PC-3 (cell line): ENCODE measurements at regions of chr11 and their contacts with region 1.

Region 1: GRCh38 chr11:7571640-7572000 is 57.8 kb downstream of the PPFIBP2 start:
- DNase-seq: peak; percentile 82
- ATAC-seq: peak; percentile 88
- H3K4me3 ChIP-seq: no peak overlapping the region
- H3K27ac ChIP-seq: no peak overlapping the region
- H3K4me1 ChIP-seq: peaks cover 25% of the 10 kb centered on the region
- H3K27me3 ChIP-seq: 0 out of 2 replicates have a peak, but pooled peaks cover 5% of the 10 kb centered on the region
- CTCF ChIP-seq: peak; percentile 93

Region 2: GRCh38 chr11:7143908-7144307 is 427.7 kb before region 1 on chr11:
- CTCF ChIA-PET with region 1: no interaction called
- POLR2A ChIA-PET with region 1: no interaction called
- intact Hi-C with region 1: loop called (anchors 10 kb)
- DNase-seq: peak; percentile 56
- ATAC-seq: peak; percentile 74
- H3K4me3 ChIP-seq: no peak overlapping the region
- H3K27ac ChIP-seq: no peak overlapping the region
- H3K4me1 ChIP-seq: no peaks in the 10 kb centered on the region
- H3K27me3 ChIP-seq: peaks cover 22% of the 10 kb centered on the region
- CTCF ChIP-seq: peak; percentile 72

Region 3: GRCh38 chr11:7612661-7613393 is 41.2 kb after region 1 on chr11:
- CTCF ChIA-PET with region 1: no interaction called
- POLR2A ChIA-PET with region 1: no interaction called
- intact Hi-C with region 1: no loop called
- DNase-seq: peak; percentile 64
- ATAC-seq: no peak
- H3K4me3 ChIP-seq: no peak overlapping the region
- H3K27ac ChIP-seq: no peak overlapping the region
- H3K4me1 ChIP-seq: peaks cover 23% of the 10 kb centered on the region
- H3K27me3 ChIP-seq: no peaks in the 10 kb centered on the region
- CTCF ChIP-seq: no peak

Region 4: DNA sequence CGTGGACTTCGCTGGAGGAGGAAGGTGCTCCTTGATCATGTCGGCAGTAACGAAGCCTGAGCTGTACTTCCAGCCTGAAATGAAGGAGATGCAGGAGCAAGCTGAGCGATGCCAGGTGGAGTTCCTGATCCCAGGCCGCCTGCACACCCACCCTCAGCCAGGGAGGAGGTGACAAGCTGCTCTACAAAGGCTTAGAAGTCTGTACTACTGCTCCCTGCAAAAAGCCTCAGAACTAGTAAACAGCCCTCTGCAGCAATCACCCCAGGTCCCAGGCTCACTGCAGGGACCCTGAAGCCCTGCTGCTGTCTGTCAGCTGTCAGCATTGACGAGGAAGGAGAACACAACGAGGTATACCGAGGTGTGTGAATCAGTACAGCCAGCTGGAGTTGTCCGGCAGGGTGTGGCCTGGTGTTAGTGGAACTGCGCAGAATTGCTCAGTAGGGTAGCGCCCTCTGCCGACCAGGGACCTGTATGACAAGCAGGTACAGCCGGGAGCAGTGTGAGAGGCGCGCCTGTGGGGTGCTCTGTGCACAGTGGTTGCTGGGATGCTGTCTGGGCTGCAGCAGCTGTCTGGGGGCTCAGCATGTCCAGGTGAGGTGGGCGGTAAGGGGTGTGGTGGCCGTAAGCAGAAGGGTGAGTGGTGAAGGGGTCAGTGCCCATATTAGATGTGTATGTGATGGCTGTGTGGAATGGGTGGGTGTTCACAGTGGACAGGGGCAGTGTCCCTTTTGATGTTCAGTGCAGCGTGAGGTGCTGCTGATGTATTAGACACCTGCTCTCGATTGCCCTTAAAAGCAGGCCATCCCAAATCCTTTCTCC is 94.1 kb after region 1 on chr11:
- CTCF ChIA-PET with region 1: interaction called, 4 read pairs
- POLR2A ChIA-PET with region 1: no interaction called
- intact Hi-C with region 1: loop called (anchors 1 kb)
- DNase-seq: peak; percentile 86
- ATAC-seq: peak; percentile 100
- H3K4me3 ChIP-seq: no peak overlapping the region
- H3K27ac ChIP-seq: no peak overlapping the region
- H3K4me1 ChIP-seq: no peaks in the 10 kb centered on the region
- H3K27me3 ChIP-seq: no peaks in the 10 kb centered on the region
- CTCF ChIP-seq: peak; percentile 83

Region 5: GRCh38 chr11:7690648-7691047 is 119.0 kb after region 1 on chr11:
- CTCF ChIA-PET with region 1: interaction called, 8 read pairs
- POLR2A ChIA-PET with region 1: no interaction called
- intact Hi-C with region 1: loop called (anchors 1 kb)
- DNase-seq: peak; percentile 50
- ATAC-seq: no peak; the same call in 1 of the 2 replicates
- H3K4me3 ChIP-seq: no peak overlapping the region
- H3K27ac ChIP-seq: no peak overlapping the region
- H3K4me1 ChIP-seq: no peaks in the 10 kb centered on the region
- H3K27me3 ChIP-seq: peaks cover 35% of the 10 kb centered on the region
- CTCF ChIP-seq: no peak

Region 6: DNA sequence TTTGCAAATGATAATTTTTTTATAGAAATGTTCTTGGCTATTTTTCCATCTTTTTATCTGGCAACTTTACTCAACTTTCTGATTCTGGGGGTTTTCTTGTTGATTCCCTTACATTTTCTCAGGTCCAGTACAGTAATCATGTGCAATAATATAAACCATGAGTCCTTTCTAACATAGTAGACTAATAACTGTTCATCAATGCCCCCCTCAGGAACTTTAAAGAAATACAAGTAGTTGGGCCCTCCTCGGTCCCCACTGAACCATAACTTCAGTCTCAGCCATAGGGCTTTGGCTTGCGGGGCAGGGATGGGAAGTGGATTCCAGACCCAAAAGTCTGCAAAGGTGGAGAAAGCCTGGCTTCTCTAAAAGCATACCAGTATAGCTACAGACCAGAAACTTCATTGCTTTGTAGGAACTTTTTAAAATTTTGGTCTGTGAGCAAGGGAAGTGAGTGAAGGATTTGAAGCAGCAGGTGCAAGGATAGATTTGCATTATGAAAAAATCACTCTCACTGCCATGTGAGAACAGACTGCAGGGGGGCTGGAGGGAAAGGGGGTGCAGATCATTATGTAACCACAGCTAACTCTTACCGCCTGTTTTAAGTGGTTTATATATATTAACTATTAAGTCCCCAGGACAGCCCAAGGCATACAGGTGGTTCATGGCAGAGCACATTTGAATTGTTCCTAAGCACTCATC is 498.9 kb after region 1 on chr11:
- CTCF ChIA-PET with region 1: no interaction called
- POLR2A ChIA-PET with region 1: no interaction called
- intact Hi-C with region 1: no loop called
- DNase-seq: peak; percentile 50
- ATAC-seq: peak; percentile 57
- H3K4me3 ChIP-seq: no peak overlapping the region
- H3K27ac ChIP-seq: no peak overlapping the region
- H3K4me1 ChIP-seq: peaks cover 16% of the 10 kb centered on the region
- H3K27me3 ChIP-seq: peaks cover 16% of the 10 kb centered on the region
- CTCF ChIP-seq: peak; percentile 58